GM12878 (cell line): ENCODE measurements at regions of chr10 and their contacts with region 1.

Region 1: DNA sequence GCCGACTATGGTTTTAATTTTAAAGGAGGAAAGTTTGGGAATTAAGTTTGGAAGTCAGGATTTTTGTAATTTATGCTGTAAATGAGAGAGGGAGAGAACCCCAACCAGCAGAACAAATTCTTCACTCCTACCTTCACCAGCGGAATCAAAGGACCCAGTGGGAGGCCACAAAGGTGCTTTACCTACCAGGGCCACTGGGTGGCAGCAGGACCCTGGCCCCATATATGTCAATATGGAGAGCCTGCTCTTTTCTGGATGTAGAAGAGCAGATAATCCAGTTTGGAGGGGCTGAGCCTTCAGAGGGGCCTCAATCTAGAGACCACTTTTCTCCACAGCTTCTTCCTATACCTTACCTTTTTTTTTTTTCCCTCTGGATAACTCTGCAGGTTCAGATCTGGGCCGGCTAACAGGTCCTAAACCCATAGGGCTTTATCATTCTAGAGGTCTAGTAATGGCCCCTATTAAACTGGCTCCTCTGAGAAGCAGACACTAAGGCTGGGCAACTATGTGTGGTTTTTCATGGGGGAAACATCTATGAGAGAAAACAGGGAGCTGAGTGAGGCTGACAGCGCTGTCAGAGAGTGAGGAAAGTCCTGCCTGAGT is 8.5 kb upstream of the SCD start:
- DNase-seq: no peak
- ATAC-seq: peak; percentile 88
- H3K4me3 ChIP-seq: no peak overlapping the region
- H3K27ac ChIP-seq: no peak overlapping the region
- H3K4me1 ChIP-seq: peaks cover 14% of the 10 kb centered on the region
- H3K27me3 ChIP-seq: no peaks in the 10 kb centered on the region; a peak in 1 of 4 replicates
- CTCF ChIP-seq: peak; percentile 91 to 93 (median 92)
- EP300 ChIP-seq: no peak
- POLR2A ChIP-seq: no peak
- RAD21 ChIP-seq: peak; percentile 93

Region 2: GRCh38 chr10:100303724-100304319 is 34.7 kb before region 1 on chr10:
- CTCF ChIA-PET with region 1: interaction called, 4 read pairs
- POLR2A ChIA-PET with region 1: interaction called, 7 read pairs
- RAD21 ChIA-PET with region 1: interaction called, 12 read pairs
- SMC1A ChIA-PET with region 1: interaction called, 4 read pairs
- in situ Hi-C with region 1: no loop called
- intact Hi-C with region 1: loop called (anchors 1 kb)
- DNase-seq: no peak
- ATAC-seq: peak; percentile 74
- H3K4me3 ChIP-seq: no peak overlapping the region
- H3K27ac ChIP-seq: no peak overlapping the region
- H3K4me1 ChIP-seq: no peaks in the 10 kb centered on the region
- H3K27me3 ChIP-seq: no peaks in the 10 kb centered on the region; a peak in 2 of 4 replicates
- CTCF ChIP-seq: peak; percentile 59 to 61 (median 60)
- EP300 ChIP-seq: no peak
- POLR2A ChIP-seq: no peak
- RAD21 ChIP-seq: peak; percentile 73

Region 3: GRCh38 chr10:100373298-100374136 is 35.0 kb after region 1 on chr10:
- CTCF ChIA-PET with region 1: interaction called, 14 read pairs
- POLR2A ChIA-PET with region 1: interaction called, 191 read pairs
- RAD21 ChIA-PET with region 1: interaction called, 10 read pairs
- SMC1A ChIA-PET with region 1: interaction called, 118 read pairs
- in situ Hi-C with region 1: no loop called
- intact Hi-C with region 1: no loop called
- DNase-seq: peak; percentile 85
- ATAC-seq: peak; percentile 95
- H3K4me3 ChIP-seq: peak overlapping the region; percentile 94
- H3K27ac ChIP-seq: peak overlapping the region; percentile 85
- H3K4me1 ChIP-seq: peaks cover 34% of the 10 kb centered on the region
- H3K27me3 ChIP-seq: no peaks in the 10 kb centered on the region
- CTCF ChIP-seq: no peak
- EP300 ChIP-seq: peak in 1 of 2 experiments; percentile 22; a peak in 1 of 4 replicates
- POLR2A ChIP-seq: peak; percentile 74
- RAD21 ChIP-seq: no peak

Region 4: GRCh38 chr10:100438674-100439315 is 100.3 kb after region 1 on chr10:
- CTCF ChIA-PET with region 1: interaction called, 312 read pairs
- POLR2A ChIA-PET with region 1: interaction called, 3 read pairs
- RAD21 ChIA-PET with region 1: interaction called, 214 read pairs
- SMC1A ChIA-PET with region 1: interaction called, 277 read pairs
- in situ Hi-C with region 1: loop called (anchors 5 kb)
- intact Hi-C with region 1: loop called (anchors 1 kb)
- DNase-seq: no peak
- ATAC-seq: no peak
- H3K4me3 ChIP-seq: no peak overlapping the region
- H3K27ac ChIP-seq: no peak overlapping the region
- H3K4me1 ChIP-seq: no peaks in the 10 kb centered on the region
- H3K27me3 ChIP-seq: no peaks in the 10 kb centered on the region
- CTCF ChIP-seq: no peak
- EP300 ChIP-seq: no peak
- POLR2A ChIP-seq: no peak
- RAD21 ChIP-seq: no peak

Region 5: DNA sequence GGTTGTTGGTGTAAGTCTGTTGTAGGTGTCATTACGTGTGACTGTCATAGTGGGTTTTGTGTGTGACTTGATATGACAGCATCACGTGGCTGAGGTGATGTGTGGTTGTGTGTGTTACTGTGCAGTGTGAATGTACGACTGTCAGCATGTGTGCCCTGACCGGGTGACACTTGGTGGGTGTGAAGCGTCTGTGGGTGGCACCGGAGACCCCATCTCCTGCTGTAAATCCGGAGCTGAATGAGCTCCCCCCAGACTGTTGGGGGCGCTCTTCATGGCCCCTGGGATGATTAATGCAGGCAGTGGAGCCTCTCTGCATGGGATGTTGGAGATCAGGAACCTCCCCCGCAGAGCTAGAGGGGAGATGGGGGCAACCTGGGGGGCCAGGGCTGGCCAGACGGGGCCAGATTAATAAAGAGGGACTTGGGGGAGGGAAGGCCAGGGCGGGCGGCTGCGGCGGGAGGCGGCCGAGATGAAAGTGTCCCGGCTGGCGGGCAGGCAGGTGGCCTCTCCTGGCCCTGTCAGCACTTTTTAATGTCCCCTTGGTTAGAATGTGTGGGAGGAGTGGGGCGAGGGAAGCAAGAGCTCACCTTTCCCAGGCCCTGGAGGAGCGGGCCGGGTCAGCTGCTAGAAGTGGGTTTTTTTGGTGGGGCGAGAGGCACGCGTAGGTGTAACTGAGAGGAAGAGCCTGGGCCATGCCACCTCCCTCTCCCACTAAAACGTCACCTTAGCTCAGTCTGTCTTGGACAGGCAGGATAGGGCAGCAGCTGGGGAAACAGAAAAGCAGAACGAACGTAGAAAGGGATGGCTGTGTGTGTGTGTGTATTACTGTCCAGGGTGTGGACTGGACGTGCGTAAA is 231.3 kb after region 1 on chr10:
- CTCF ChIA-PET with region 1: no interaction called
- POLR2A ChIA-PET with region 1: no interaction called
- RAD21 ChIA-PET with region 1: no interaction called
- SMC1A ChIA-PET with region 1: no interaction called
- in situ Hi-C with region 1: no loop called
- intact Hi-C with region 1: no loop called
- DNase-seq: no peak
- ATAC-seq: peak; percentile 35
- H3K4me3 ChIP-seq: no peak overlapping the region
- H3K27ac ChIP-seq: no peak overlapping the region
- H3K4me1 ChIP-seq: no peaks in the 10 kb centered on the region
- H3K27me3 ChIP-seq: peaks cover 7% of the 10 kb centered on the region in 2 experiments; a peak in 2 of 4 replicates
- CTCF ChIP-seq: peak in 2 of 3 experiments; percentile 10 to 17; a peak in 1 of 6 replicates
- EP300 ChIP-seq: no peak
- POLR2A ChIP-seq: no peak
- RAD21 ChIP-seq: no peak

Region 6: DNA sequence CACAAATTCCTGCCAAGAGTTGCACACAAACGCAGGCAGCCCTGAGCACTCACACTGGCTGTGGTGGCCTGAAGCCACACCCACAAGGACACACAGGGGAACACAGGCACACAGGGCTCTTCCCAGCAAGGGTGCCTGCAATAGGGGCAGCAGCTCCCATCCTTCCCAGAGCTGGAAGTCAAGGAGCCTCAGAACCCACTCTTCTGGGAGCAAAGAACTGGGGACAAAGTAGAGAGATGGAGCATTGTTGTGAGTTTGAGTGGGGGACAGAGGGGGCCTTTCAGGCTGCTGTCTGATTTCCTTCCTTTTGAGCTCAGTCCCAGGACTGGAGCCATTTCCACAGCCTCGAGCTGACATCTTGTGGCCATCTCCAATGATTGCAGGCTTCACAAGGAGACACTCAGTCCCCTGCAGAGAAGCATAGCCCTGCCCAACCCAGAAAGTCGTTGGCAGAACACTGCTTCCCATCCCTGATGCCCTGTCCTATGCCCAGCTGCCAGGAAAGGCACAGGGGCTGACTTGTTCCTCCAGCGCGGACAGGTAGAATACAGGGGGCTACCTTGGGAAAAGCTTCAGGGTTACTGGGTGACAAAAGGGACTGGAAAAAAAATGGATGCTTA is 539.9 kb after region 1 on chr10:
- CTCF ChIA-PET with region 1: no interaction called
- POLR2A ChIA-PET with region 1: no interaction called
- RAD21 ChIA-PET with region 1: no interaction called
- SMC1A ChIA-PET with region 1: interaction called, 4 read pairs
- in situ Hi-C with region 1: no loop called
- intact Hi-C with region 1: loop called (anchors 5 kb)
- DNase-seq: no peak
- ATAC-seq: peak; percentile 86
- H3K4me3 ChIP-seq: no peak overlapping the region
- H3K27ac ChIP-seq: no peak overlapping the region
- H3K4me1 ChIP-seq: no peaks in the 10 kb centered on the region
- H3K27me3 ChIP-seq: no peaks in the 10 kb centered on the region; a peak in 1 of 4 replicates
- CTCF ChIP-seq: peak; percentile 55 to 76 (median 63); a peak in 5 of 6 replicates
- EP300 ChIP-seq: no peak
- POLR2A ChIP-seq: no peak
- RAD21 ChIP-seq: peak; percentile 77